AG04450 (cell line): ENCODE measurements at regions of chr22 and their contacts with region 1.

Region 1: DNA sequence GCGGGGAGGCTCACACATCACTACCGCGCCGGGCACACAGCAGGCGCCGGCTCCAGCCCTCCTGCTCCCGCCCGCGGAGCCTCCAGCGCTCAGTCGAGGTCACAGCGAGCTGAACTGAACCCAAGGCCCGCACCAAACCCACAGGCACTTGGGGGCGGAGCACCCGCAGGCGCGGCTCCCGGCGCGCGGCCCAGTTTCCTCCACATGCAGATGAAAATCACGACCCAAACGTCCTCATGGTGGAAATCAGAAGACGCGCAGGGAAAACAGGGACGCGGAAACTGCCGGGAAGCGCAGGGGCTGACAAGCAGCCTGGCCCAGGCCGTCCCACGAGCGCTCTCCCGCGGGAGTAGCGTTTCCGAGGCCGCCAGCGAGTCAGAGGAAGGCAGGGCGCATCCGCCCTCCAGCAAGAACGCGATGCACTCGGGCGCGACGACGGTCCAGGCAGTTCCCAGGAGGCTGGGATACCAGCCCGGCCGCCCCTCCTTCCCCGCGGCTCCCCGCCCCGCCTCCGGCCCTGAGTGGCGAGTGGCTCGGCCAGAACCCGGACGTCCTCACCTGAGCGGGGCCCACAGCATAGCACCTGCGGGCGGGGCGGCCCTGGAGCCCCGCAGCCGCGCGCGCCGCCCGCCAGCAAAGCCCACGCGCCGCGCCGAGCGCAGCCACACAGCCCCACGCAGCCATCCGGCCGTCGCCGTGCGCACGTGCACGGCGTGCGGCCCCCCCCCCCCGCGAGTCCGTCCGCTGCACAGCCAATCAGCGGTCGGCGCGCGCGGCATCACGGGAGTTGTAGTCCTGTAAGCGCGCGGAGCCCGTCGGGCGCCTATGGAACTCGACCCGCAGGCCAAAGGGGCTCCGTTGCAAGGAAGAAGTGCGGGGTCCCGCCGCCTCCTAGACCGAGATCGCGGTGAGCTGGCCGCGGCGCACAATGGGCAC is at the start of gene HDHD5:
- DNase-seq: peak; percentile 49
- H3K4me3 ChIP-seq: peak within 1 kb of the TSS; percentile 74
- H3K27ac ChIP-seq: peak within 1 kb of the TSS; percentile 81
- H3K27me3 ChIP-seq: no peaks in the 10 kb centered on the region
- CTCF ChIP-seq: no peak
- polyA plus RNA-seq, gene HDHD5: 14.4 and 17.0 TPM in 2 replicates

Region 2: GRCh38 chr22:17678872-17679271 is 520.0 kb after region 1 on chr22:
- CTCF ChIA-PET with region 1: no interaction called
- POLR2A ChIA-PET with region 1: interaction called, 13 read pairs
- DNase-seq: no peak
- H3K4me3 ChIP-seq: no peak overlapping the region
- H3K27ac ChIP-seq: no peak overlapping the region
- H3K27me3 ChIP-seq: no peaks in the 10 kb centered on the region
- CTCF ChIP-seq: no peak